Left colon (tissue), 2 donors: ENCODE measurements at regions of chr5 and their contacts with region 1.

Region 1: DNA sequence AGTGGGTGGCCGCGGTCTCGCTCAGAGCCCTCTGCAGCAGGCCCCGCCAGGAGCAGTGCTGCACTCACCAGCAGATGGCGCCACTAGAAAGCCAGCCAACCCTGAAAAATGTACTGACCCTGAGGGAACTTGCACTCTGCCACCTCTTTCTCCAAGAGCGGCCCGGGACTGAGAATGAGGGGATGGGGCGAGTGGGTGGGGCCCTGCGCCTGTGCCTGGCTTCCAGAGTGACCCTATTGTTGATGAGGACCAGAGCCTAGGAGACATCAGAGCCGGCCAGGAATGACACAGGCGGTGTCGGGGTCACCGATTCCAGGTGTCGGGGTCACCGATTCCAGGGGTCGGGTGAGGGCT is 2.9 kb upstream of the IL17B start:
- DNase-seq: peak; percentile 72 to 82
- ATAC-seq: peak; percentile 84

Region 2: GRCh38 chr5:149561848-149562247 is 179.9 kb after region 1 on chr5:
- intact Hi-C with region 1: loop called (anchors 5 to 10 kb)
- DNase-seq: no peak
- ATAC-seq: no peak

Region 3: DNA sequence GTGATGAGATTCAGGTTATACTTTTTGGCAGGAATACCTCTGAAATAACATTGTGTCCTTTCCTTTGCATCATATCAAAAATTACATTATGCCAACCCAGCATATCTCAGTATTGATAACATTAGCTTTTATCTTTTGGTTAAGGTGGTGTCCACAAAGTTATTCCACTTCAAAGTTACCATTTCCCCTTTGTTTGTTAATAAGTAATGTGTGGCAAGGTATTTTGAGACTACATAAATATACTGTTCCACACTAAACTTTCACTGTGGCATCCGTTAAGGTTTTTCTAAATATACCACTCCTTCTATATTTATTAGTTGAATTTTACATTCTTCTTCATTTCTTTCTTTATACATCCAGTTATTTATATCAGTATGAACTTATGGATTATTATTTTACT is 185.3 kb after region 1 on chr5:
- intact Hi-C with region 1: loop called (anchors 5 to 10 kb)
- DNase-seq: no peak
- ATAC-seq: no peak